Breast epithelium (tissue), 4 donors: ENCODE measurements at regions of chr6 and their contacts with region 1.

Region 1: GRCh38 chr6:89763550-89763949 is 56.0 kb downstream of the MDN1 start:
- DNase-seq: no peak
- H3K4me3 ChIP-seq: no peak overlapping the region
- H3K27ac ChIP-seq: no peak overlapping the region
- H3K4me1 ChIP-seq: no peaks in the 10 kb centered on the region
- H3K27me3 ChIP-seq: no peaks in the 10 kb centered on the region
- CTCF ChIP-seq: no peak
- POLR2A ChIP-seq: no peak

Region 2: GRCh38 chr6:89707766-89708165 is 55.8 kb before region 1 on chr6:
- intact Hi-C with region 1: loop called (anchors 2 kb)
- DNase-seq: no peak
- H3K4me3 ChIP-seq: no peak overlapping the region
- H3K27ac ChIP-seq: no peak overlapping the region
- H3K4me1 ChIP-seq: no peaks in the 10 kb centered on the region
- H3K27me3 ChIP-seq: no peaks in the 10 kb centered on the region
- CTCF ChIP-seq: no peak
- POLR2A ChIP-seq: no peak